Activated CD8-positive, alpha-beta memory T cell treated with anti-CD3 and anti-CD28 coated beads, Interleukin-2, amount 10 ng/mL, durations not matched to agents 7 days and 5 days (primary cell): ENCODE measurements at regions of chr11 and their contacts with region 1.

Region 1: DNA sequence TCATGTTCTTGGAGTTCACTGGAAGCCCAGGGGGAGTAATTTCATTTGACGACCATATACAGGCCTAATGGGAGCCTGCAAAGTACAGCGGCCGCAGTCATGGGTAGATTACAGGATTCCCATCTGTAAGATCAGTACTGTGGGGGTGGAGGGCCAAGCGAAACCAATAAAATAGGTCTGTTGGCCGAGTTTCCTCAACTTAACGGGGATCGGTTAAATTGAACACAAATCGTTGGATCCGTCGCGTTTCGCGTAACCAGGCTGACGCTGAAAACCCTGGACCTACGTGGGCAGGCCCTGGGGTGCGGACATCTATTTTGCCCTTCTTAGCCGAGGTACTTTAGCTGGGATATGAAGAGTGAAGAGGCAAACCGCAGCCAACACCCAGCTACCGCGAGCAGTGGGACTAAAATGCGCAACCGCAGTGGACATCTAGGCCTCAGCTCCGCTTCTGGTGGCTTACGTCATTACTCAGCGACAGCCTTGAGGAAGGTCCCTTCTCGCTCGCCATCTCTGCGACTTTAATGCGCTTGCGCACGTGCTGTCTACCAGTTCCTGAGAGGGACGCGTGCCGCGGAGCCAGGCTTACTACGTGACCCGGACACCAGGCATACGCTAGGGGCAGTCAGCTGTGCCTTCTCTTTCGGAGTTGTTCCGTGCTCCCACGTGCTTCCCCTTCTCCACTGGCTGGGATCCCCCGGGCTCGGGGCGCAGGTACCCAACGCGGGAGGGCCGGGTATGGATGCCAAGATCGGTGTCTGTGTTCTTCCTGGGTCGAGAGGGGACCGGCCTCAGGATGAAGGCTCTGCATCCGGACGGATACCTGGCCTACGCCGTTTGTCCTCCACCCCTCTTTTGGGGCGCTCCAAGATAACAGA is at the start of gene NAT10:
- DNase-seq: peak; percentile 98
- ATAC-seq: peak; percentile 95
- H3K4me3 Mint-ChIP-seq: peak within 1 kb of the TSS; percentile 85
- H3K27ac Mint-ChIP-seq: peak within 1 kb of the TSS; percentile 98
- H3K4me1 Mint-ChIP-seq: peaks cover 55% of the 10 kb centered on the region
- H3K27me3 Mint-ChIP-seq: no peaks in the 10 kb centered on the region
- total RNA-seq, gene NAT10: 63.8 to 93.9 TPM

Region 2: GRCh38 chr11:34051349-34052035 is 53.8 kb before region 1 on chr11 and contains the start of gene CAPRIN1:
- CTCF ChIA-PET with region 1: interaction called, 14 read pairs
- DNase-seq: peak; percentile 91
- ATAC-seq: peak; percentile 82
- H3K4me3 Mint-ChIP-seq: peak within 1 kb of the TSS; percentile 98
- H3K27ac Mint-ChIP-seq: peak within 1 kb of the TSS; percentile 97
- H3K4me1 Mint-ChIP-seq: peaks cover 28% of the 10 kb centered on the region
- H3K27me3 Mint-ChIP-seq: no peaks in the 10 kb centered on the region
- total RNA-seq, gene CAPRIN1: 227 to 267 TPM